GM12878 (cell line): ENCODE measurements at regions of chr17 and their contacts with region 1.

Region 1: GRCh38 chr17:41801374-41802271 is 10.1 kb downstream of the P3H4 start:
- DNase-seq: no peak
- ATAC-seq: peak; percentile 95
- H3K4me3 ChIP-seq: no peak overlapping the region
- H3K27ac ChIP-seq: no peak overlapping the region
- H3K4me1 ChIP-seq: no peaks in the 10 kb centered on the region
- H3K27me3 ChIP-seq: no peaks in the 10 kb centered on the region
- CTCF ChIP-seq: peak; percentile 92 to 96 (median 95)
- EP300 ChIP-seq: no peak
- POLR2A ChIP-seq: no peak
- RAD21 ChIP-seq: peak; percentile 90

Region 2: DNA sequence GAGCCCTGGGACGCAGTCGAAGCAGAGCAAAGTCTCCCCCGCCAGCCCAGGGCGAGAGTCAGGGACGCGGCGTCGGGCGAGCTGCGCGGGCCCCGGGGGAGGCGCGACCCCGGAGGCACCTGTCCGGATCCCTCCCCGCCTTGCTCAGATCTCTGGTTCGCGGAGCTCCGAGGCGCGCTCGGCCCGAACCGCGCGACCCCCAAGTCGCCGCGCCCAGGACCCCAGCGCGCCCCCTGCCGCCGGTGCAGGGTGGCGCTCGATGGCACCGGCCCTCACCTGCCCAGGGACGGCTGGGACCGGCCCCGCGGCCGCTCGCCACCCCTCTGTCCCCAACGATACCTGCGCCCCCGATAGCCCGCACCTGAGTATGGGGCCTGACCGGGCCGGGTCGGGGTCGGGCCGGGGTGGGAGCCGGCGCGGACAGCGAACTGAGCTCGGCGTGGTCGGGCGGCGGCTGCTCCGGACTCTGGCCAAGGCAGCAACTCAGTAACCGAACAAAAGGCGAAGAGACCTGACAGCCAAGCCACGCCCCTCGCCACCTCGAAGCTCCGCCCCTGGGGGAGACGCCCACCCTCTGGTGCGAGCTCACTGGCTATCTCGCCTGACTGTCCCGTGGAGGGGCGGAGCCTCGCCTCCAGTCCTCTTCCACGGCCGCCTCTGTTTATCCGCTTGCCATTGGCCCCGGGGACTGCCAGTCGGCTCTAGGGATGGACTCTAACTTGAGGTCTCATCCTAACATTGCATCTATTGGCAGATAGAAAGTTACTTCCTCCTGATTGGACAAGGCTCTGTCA is 15.2 kb before region 1 on chr17 and contains the start of gene JUP:
- CTCF ChIA-PET with region 1: interaction called, 25 read pairs
- POLR2A ChIA-PET with region 1: interaction called, 8 read pairs
- RAD21 ChIA-PET with region 1: interaction called, 6 read pairs
- SMC1A ChIA-PET with region 1: interaction called, 3 read pairs
- in situ Hi-C with region 1: no loop called
- intact Hi-C with region 1: no loop called
- DNase-seq: peak; percentile 80
- ATAC-seq: peak; percentile 98
- H3K4me3 ChIP-seq: peak within 1 kb of the TSS; percentile 67; the same call in 1 of the 2 replicates
- H3K27ac ChIP-seq: no peak within 1 kb of the TSS
- H3K4me1 ChIP-seq: peaks cover 13% of the 10 kb centered on the region
- H3K27me3 ChIP-seq: peaks cover 0 to 6% of the 10 kb centered on the region in 2 experiments; a peak in 1 of 4 replicates
- CTCF ChIP-seq: peak; percentile 38 to 50 (median 47); a peak in 5 of 6 replicates
- EP300 ChIP-seq: no peak
- POLR2A ChIP-seq: peak; percentile 74
- RAD21 ChIP-seq: no peak
- polyA plus RNA-seq, gene JUP: 1.5 to 2.9 TPM

Region 3: GRCh38 chr17:41811549-41812380 is 10.1 kb after region 1 on chr17 and contains the start of gene P3H4:
- CTCF ChIA-PET with region 1: interaction called, 15 read pairs
- POLR2A ChIA-PET with region 1: no interaction called
- RAD21 ChIA-PET with region 1: no interaction called
- SMC1A ChIA-PET with region 1: no interaction called
- in situ Hi-C with region 1: no loop called
- intact Hi-C with region 1: no loop called
- DNase-seq: no peak
- ATAC-seq: peak; percentile 95
- H3K4me3 ChIP-seq: peak within 1 kb of the TSS; percentile 37; the same call in 1 of the 2 replicates
- H3K27ac ChIP-seq: no peak within 1 kb of the TSS
- H3K4me1 ChIP-seq: peaks cover 8% of the 10 kb centered on the region; the same call in 1 of the 2 replicates
- H3K27me3 ChIP-seq: peaks cover 0 to 7% of the 10 kb centered on the region in 2 experiments; a peak in 3 of 4 replicates
- CTCF ChIP-seq: peak; percentile 47 to 77 (median 66)
- EP300 ChIP-seq: no peak
- POLR2A ChIP-seq: no peak
- RAD21 ChIP-seq: 0 out of 2 replicates have a peak, but pooled peaks have one; percentile 14
- polyA plus RNA-seq, gene P3H4: 0.37 TPM in 1 of 2 experiments, not detected in the other